ENCODE measurements at regions of chr10 and their contacts with region 1.

Region 1: DNA sequence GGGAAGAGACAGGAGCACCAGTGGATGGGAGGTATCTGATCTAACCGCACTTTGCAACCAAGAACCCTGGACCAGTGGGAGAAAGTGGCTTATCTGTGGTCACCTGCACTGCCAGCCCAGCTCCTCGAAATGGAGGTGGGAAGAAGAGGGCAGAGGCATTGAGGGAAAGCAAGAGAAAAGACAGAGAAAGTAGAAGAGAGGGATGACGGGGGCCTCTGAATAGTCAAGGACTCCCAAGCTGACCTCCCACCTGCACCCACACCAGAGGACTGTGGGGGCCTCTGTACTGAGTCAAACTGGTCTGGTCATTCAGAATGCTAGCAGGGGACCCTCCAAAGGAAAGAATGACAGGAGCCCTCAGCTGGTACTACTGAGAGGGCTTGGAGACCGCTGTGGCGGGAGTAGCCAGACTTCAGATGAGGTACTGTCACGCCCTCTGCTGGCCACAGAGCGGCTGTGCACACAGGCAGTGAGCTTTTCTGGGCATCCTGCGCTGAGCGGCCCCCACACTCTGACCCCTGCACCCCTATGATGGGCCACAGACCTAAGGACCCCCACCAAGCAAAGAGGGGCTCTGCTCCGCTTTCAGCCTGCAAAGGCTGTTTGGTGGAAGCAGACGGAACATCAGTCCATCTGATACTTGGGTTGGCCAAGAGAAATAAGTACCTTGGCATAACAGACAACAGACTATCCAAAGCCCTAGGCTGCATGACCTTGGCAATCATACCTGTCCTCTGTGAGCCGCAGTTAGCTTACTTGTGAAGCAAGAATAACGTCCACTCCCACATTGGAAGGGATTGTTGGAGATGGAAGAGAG is 112.9 kb downstream of the COL13A1 start:
- DNase-seq: peak in 4 of 5 donors; percentile 16 to 31 (median 26)
- H3K4me3 ChIP-seq: no peak overlapping the region
- H3K4me3 Mint-ChIP-seq: no peak overlapping the region
- H3K27ac ChIP-seq: no peak overlapping the region
- H3K27ac Mint-ChIP-seq: no peak overlapping the region
- H3K4me1 ChIP-seq: no peaks in the 10 kb centered on the region
- H3K4me1 Mint-ChIP-seq: no peaks in the 10 kb centered on the region
- H3K27me3 ChIP-seq: no peaks in the 10 kb centered on the region
- H3K27me3 Mint-ChIP-seq: peaks cover 2 to 12% of the 10 kb centered on the region in 2 donors

Region 2: DNA sequence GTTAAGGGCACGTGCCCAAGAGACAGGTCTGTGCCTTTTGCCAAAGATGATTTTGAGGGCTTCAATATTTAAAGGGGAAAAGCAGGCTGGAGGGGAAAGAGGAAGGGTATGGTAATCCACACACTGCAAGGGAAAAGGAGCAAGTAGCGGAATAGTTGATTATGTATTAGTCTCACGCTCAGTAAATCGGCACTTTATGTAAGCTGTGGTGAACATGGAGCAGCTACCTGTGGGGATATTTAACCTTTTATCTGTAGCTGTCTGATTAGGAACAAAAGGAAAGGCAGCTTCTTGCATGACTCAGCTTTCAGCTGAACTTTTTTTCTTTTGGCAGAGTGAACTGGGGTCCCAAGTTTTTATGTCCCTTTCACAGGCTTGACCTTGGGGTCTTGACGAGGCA is 10.5 kb after region 1 on chr10:
- CTCF ChIA-PET with region 1: interaction called, 13 read pairs
- POLR2A ChIA-PET with region 1: no interaction called
- intact Hi-C with region 1: no loop called
- DNase-seq: no peak
- H3K4me3 ChIP-seq: no peak overlapping the region
- H3K4me3 Mint-ChIP-seq: no peak overlapping the region
- H3K27ac ChIP-seq: no peak overlapping the region
- H3K27ac Mint-ChIP-seq: no peak overlapping the region
- H3K4me1 ChIP-seq: no peaks in the 10 kb centered on the region
- H3K4me1 Mint-ChIP-seq: no peaks in the 10 kb centered on the region
- H3K27me3 ChIP-seq: no peaks in the 10 kb centered on the region
- H3K27me3 Mint-ChIP-seq: peaks cover 4 to 15% of the 10 kb centered on the region in 2 donors

Measured in CD4-positive, alpha-beta memory T cell (primary cell).